OCI-LY7 (cell line): ENCODE measurements at regions of chr12 and their contacts with region 1.

Region 1: GRCh38 chr12:112937741-112938719 is at the start of gene OAS3:
- DNase-seq: peak; percentile 49
- H3K4me3 ChIP-seq: peak within 1 kb of the TSS; percentile 71
- H3K27ac ChIP-seq: peak within 1 kb of the TSS; percentile 66
- H3K4me1 ChIP-seq: peaks cover 31% of the 10 kb centered on the region
- CTCF ChIP-seq: no peak
- total RNA-seq, gene OAS3: 0.79 and 4.7 TPM in 2 replicates

Region 2: DNA sequence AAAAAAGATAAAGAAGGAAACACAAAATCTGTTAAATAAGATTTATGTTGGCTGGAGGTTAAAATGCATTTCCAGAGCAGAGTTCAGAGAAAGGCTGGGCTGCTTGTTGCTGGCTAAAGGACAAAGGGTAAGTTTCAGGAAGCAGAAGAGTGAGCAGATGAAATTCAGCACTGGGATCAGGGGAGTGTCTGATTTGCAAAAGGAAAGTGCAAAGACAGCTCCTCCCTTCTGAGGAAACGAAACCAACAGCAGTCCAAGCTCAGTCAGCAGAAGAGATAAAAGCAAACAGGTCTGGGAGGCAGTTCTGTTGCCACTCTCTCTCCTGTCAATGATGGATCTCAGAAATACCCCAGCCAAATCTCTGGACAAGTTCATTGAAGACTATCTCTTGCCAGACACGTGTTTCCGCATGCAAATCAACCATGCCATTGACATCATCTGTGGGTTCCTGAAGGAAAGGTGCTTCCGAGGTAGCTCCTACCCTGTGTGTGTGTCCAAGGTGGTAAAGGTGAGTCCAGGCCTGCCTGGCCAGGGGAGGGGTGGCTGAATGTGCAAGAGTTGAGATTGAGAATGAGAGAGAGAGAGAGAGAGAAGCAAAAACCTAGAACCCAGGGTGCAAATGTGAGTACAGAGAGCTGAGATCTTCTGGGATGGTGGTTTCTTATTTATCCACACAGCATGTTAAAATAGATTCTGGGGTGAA is 31.2 kb before region 1 on chr12 and contains the start of gene OAS1:
- CTCF ChIA-PET with region 1: no interaction called
- POLR2A ChIA-PET with region 1: interaction called, 10 read pairs
- intact Hi-C with region 1: loop called (anchors 2 kb)
- DNase-seq: peak; percentile 80
- H3K4me3 ChIP-seq: peak within 1 kb of the TSS; percentile 71
- H3K27ac ChIP-seq: peak within 1 kb of the TSS; percentile 85
- H3K4me1 ChIP-seq: peaks cover 66% of the 10 kb centered on the region
- CTCF ChIP-seq: no peak
- total RNA-seq, gene OAS1: 40.3 and 49.6 TPM in 2 replicates

Region 3: DNA sequence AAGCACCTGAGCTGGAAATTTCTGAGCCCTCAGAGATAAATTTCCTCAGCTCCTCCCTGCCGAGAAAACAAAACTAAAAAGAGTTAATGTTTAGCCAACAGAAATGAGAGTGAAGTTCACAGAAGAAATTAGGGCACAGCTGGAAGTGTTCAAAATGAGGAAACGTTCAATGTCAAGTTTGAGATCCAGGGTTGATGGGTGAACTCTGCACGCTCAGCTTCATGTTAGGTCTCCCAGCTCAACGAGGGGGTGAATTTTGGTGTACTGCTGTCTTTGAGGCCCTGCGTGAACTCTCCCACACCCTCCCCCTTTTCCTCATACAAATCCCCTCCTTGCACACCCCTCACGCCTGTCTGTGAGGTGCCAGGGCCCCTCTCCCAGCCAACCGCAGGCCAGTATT is 13.0 kb before region 1 on chr12:
- CTCF ChIA-PET with region 1: no interaction called
- POLR2A ChIA-PET with region 1: no interaction called
- intact Hi-C with region 1: no loop called
- DNase-seq: no peak
- H3K4me3 ChIP-seq: no peak overlapping the region
- H3K27ac ChIP-seq: no peak overlapping the region
- H3K4me1 ChIP-seq: no peaks in the 10 kb centered on the region
- CTCF ChIP-seq: no peak